ENCODE measurements at regions of chr4 and their contacts with region 1.

Region 1: DNA sequence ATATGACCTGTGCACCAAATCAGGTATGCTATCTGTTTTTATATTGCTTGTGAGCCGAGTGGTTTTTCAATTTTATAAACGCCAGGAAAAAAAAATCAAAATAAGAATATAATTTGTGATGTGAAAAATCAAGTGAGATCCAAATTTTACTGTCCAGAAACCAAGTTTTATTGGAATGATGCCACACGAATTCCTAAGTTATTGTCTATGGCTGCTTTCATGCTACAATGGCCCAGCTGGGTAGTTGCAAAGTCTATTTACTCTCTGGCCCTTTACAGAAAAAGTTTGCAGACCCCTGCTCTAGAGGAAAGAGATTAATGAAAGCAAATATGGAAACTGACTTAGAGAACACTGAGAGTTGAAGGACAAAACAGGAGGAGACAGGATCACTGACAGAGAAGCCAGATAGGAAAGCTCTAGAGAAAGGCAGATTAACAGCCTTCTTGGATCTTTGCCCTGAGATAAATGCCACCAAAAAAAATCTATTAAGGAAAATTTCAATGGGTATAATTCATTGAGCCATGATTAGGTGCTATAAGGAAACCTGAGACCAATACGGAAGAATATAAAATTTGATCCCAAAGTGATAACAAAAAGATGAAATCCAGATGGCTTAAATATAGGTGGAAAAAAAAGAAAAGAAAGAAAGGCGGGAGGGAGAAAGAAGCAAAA is 29.8 kb downstream of the PRSS12 start:
- DNase-seq: no peak
- ATAC-seq: no peak

Region 2: GRCh38 chr4:118268780-118269179 is 54.2 kb before region 1 on chr4:
- intact Hi-C with region 1: loop called (anchors 2 kb)
- DNase-seq: no peak
- ATAC-seq: no peak

Region 3: GRCh38 chr4:118289794-118290193 is 33.2 kb before region 1 on chr4:
- intact Hi-C with region 1: no loop called
- DNase-seq: no peak
- ATAC-seq: peak; percentile 59